K562 (cell line): ENCODE measurements at regions of chr10 and their contacts with region 1.

Region 1: DNA sequence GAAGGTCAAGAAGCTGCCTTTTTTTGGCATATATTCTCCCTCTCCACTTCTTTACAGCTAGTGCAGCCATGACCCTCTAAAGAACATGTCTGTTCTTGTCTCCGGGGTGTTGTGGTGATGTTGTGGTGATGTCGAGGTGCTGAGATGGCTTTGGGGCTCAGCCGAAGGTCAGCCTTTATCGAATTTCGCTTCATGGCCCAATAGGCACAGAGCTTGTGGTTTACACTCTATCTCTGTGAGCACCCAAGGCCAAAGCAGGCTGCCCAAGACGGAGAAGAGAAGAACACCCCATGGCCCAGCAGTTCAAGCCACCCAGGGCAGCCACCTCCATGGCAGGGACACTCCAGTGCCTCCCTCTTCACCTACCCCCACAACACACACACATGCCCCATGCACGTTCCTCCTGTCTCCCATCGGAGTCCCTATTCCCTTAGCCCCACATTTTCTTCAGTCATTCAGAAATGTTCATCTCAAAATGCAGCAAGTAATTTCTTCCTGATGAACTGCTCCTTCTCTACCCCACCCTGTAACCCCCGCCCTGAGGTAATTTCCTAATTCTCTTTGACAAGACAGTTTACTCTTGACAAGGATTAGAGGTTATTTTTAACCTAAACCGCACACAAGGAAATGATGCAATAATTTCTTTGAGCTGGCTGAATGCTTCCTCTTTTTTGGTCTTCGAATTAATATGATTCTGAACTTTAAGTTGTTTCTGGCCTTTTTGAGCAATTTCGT is 18.6 kb upstream of the ADRB1 start:
- DNase-seq: peak in 2 of 4 experiments; percentile 25
- ATAC-seq: peak; percentile 84
- H3K4me3 ChIP-seq: no peak overlapping the region
- H3K27ac ChIP-seq: peak overlapping the region; percentile 76
- H3K4me1 ChIP-seq: peaks cover 5 to 15% of the 10 kb centered on the region in 2 experiments; a peak in 4 of 5 replicates
- H3K27me3 ChIP-seq: no peaks in the 10 kb centered on the region; a peak in 1 of 5 replicates
- CTCF ChIP-seq: no peak
- EP300 ChIP-seq: peak; percentile 74
- POLR2A ChIP-seq: no peak
- RAD21 ChIP-seq: peak; percentile 11 to 28; a peak in 1 of 4 replicates

Region 2: GRCh38 chr10:113854011-113854760 is 170.9 kb before region 1 on chr10 and contains the starts of genes DCLRE1A and NHLRC2:
- CTCF ChIA-PET with region 1: no interaction called
- POLR2A ChIA-PET with region 1: no interaction called
- in situ Hi-C with region 1: no loop called
- intact Hi-C with region 1: loop called (anchors 10 kb)
- DNase-seq: peak; percentile 59 to 84 (median 62)
- ATAC-seq: peak; percentile 65
- H3K4me3 ChIP-seq: peak within 1 kb of the TSS; percentile 72
- H3K27ac ChIP-seq: peak within 1 kb of the TSS; percentile 94
- H3K4me1 ChIP-seq: peaks cover 0 to 5% of the 10 kb centered on the region in 2 experiments; a peak in 2 of 5 replicates
- H3K27me3 ChIP-seq: no peaks in the 10 kb centered on the region
- CTCF ChIP-seq: no peak
- EP300 ChIP-seq: peak; percentile 93
- POLR2A ChIP-seq: peak; percentile 66
- RAD21 ChIP-seq: no peak
- polyA plus RNA-seq, gene DCLRE1A: 8.5 to 15.5 TPM
- polyA plus RNA-seq, gene NHLRC2: 1.5 to 2.2 TPM

Region 3: DNA sequence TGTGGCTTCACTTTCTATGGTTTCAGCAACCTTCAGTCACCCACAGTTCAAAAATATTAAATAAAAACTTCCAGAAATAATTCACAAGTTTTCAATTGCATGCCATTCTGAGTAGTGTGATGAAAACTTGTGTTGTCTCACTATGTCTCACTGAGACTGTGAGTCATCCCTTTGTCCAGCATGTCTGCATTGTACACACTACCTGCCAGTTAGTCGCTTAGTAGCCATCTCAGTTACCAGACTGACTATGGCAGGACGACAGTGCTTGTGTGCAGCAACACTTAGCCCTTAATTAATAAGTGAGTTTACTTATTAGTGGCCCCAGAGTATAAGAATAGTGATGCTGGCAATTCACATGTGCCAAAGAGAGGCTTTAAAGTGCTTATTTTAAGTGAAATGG is 126.4 kb after region 1 on chr10:
- CTCF ChIA-PET with region 1: no interaction called
- POLR2A ChIA-PET with region 1: no interaction called
- in situ Hi-C with region 1: no loop called
- intact Hi-C with region 1: no loop called
- DNase-seq: no peak
- ATAC-seq: no peak
- H3K4me3 ChIP-seq: no peak overlapping the region
- H3K27ac ChIP-seq: no peak overlapping the region
- H3K4me1 ChIP-seq: no peaks in the 10 kb centered on the region
- H3K27me3 ChIP-seq: no peaks in the 10 kb centered on the region
- CTCF ChIP-seq: no peak
- EP300 ChIP-seq: no peak
- POLR2A ChIP-seq: no peak
- RAD21 ChIP-seq: no peak